B cell (primary cell): ENCODE measurements at regions of chr7 and their contacts with region 1.

Region 1: DNA sequence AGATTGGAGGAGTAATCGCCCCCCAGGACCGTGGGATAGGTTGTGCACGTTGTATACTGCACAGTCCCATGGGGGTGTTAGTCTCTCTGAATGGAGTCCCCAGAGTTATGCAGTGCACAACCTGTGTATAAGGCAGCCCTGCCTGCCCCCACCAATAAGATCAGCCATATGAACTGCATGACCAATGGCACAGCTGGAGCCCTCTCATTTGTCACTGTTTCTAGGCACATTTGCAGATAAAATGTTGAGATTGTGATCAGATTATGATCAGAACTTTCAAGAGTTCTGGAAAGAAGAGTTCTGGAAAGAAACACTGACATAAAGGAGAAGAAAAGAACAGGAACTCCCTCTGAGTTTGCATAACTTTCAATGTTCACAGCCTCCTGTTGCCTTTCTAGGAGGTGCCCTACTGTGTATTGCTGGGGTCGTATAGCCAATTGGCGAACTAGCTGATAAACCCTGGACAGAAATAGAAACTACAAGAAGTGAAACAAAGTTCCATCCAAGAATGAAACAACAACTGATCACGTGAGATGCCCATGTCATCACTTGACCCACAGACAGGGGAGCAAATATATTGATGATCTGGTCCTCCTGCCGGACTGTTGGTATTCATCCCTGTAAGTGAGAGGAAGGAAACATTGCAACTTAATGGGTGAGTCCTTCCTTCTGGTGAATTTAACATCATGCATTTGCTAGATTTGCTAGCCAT is 49.6 kb upstream of the TOMM7 start:
- DNase-seq: peak; percentile 64
- ATAC-seq: peak; percentile 98
- H3K4me3 ChIP-seq: peak overlapping the region in 4 of 5 experiments; percentile 24 to 51 (median 38)
- H3K4me3 Mint-ChIP-seq: peak overlapping the region; percentile 89
- H3K27ac ChIP-seq: peak overlapping the region; percentile 36 to 42
- H3K27ac Mint-ChIP-seq: peak overlapping the region; percentile 91
- H3K4me1 ChIP-seq: peaks cover 17 to 23% of the 10 kb centered on the region in 2 donors
- H3K4me1 Mint-ChIP-seq: peaks cover 31% of the 10 kb centered on the region
- H3K27me3 ChIP-seq: no peaks in the 10 kb centered on the region
- H3K27me3 Mint-ChIP-seq: no peaks in the 10 kb centered on the region
- CTCF ChIP-seq: no peak

Region 2: DNA sequence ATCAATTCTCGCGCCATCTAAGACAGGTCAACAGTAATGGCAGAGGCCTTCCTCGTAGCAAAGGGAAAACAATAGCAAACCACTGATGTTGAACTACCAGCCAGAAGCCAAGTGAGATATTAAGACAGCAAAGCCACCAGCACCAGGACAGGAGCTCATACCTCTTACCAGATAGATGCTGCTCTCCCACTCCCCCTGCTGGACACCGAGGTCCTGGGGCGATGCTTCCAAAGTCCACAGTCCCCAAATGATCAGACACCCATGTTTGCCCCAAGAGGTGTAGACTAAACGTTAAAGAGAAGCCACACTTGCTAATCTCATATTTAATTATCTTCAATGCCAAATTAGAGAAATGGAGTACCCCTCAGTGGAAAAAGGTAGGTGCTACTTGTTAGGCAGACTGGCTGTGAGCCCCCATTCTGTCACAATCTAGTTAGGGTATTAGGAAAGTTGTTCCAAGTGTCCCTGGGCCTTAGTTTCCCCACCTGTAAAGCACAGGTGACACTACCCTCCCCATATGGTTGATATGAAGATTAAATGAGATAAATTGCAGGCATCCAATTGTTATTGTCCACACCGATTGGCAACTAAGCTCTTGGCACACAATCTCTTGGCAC is 89.5 kb before region 1 on chr7:
- CTCF ChIA-PET with region 1: no interaction called
- POLR2A ChIA-PET with region 1: no interaction called
- intact Hi-C with region 1: no loop called
- DNase-seq: peak; percentile 84
- ATAC-seq: peak; percentile 96
- H3K4me3 ChIP-seq: no peak overlapping the region
- H3K4me3 Mint-ChIP-seq: no peak overlapping the region
- H3K27ac ChIP-seq: no peak overlapping the region
- H3K27ac Mint-ChIP-seq: no peak overlapping the region
- H3K4me1 ChIP-seq: no peaks in the 10 kb centered on the region
- H3K4me1 Mint-ChIP-seq: peaks cover 3% of the 10 kb centered on the region
- H3K27me3 ChIP-seq: no peaks in the 10 kb centered on the region
- H3K27me3 Mint-ChIP-seq: no peaks in the 10 kb centered on the region
- CTCF ChIP-seq: peak; percentile 87

Region 3: DNA sequence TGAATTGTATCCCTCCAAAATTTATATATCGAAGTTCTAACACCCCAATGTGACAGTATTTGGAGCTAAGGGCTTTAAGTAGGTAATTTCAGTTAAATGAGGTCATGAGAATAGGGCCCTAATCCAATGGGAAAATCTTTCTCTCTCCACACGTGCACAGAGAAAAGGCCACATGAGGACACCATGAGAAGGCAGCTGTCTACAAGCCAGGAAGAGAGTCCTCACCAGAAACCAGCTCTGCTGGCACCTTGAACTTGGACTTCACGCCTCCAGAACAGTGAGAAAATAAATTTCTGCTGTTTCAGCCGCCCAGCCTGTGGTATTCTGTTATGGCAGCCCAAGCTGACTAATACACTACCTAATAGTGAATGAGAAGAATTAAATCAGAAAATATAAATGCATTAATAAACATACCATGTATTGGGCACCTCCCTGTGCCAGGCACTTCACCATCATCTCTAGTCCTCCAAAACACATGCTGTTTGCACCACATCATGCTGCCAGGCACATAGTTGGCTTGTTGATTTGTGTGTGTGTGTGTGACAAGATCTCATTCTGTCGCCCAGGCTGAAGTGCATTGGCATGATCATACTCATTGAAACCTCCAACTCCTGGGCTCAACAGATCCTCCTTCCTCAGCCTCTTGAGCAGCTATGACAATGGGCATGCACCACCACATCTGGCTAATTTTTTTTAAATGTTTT is 40.5 kb before region 1 on chr7:
- CTCF ChIA-PET with region 1: no interaction called
- POLR2A ChIA-PET with region 1: no interaction called
- intact Hi-C with region 1: no loop called
- DNase-seq: no peak
- ATAC-seq: no peak
- H3K4me3 ChIP-seq: no peak overlapping the region
- H3K4me3 Mint-ChIP-seq: no peak overlapping the region
- H3K27ac ChIP-seq: no peak overlapping the region
- H3K27ac Mint-ChIP-seq: no peak overlapping the region
- H3K4me1 ChIP-seq: no peaks in the 10 kb centered on the region
- H3K4me1 Mint-ChIP-seq: no peaks in the 10 kb centered on the region
- H3K27me3 ChIP-seq: no peaks in the 10 kb centered on the region
- H3K27me3 Mint-ChIP-seq: no peaks in the 10 kb centered on the region
- CTCF ChIP-seq: no peak

Region 4: DNA sequence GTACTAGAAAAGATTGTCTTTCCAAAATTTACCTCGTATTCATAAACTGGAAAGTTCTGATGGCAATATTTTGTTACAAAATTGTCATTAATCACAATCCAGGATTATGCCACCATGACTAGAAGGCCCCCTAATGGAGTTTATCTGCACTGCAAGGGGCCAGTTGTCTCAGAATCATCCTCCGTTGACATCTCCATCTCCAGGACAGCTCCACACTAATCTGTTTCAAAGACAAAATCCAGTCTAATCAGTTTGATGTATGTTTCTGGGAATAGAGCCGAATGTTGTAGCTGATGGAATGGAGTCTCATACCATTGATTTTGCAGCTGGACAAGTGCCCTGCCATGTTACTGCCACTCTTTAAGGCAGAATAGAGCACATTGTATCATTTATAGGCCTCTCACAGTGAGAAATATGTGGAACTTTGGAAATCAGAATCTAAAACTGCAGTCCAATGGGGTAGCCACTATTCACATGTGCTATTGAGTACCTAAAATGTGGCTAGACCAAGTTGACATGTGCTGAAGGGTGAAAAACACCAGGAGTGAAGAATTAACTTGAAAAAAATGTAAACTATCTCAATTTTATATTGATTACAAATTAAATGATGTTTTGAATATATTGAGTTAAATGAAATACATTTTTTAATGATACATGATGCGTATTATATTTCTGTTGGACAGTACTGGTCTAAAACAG is 11.3 kb before region 1 on chr7:
- CTCF ChIA-PET with region 1: interaction called, 12 read pairs
- POLR2A ChIA-PET with region 1: no interaction called
- intact Hi-C with region 1: no loop called
- DNase-seq: peak; percentile 39
- ATAC-seq: peak; percentile 66
- H3K4me3 ChIP-seq: no peak overlapping the region
- H3K4me3 Mint-ChIP-seq: no peak overlapping the region
- H3K27ac ChIP-seq: no peak overlapping the region
- H3K27ac Mint-ChIP-seq: peak overlapping the region; percentile 11
- H3K4me1 ChIP-seq: peaks cover 0 to 3% of the 10 kb centered on the region in 2 donors
- H3K4me1 Mint-ChIP-seq: peaks cover 39% of the 10 kb centered on the region
- H3K27me3 ChIP-seq: no peaks in the 10 kb centered on the region
- H3K27me3 Mint-ChIP-seq: no peaks in the 10 kb centered on the region
- CTCF ChIP-seq: peak; percentile 82

Region 5: DNA sequence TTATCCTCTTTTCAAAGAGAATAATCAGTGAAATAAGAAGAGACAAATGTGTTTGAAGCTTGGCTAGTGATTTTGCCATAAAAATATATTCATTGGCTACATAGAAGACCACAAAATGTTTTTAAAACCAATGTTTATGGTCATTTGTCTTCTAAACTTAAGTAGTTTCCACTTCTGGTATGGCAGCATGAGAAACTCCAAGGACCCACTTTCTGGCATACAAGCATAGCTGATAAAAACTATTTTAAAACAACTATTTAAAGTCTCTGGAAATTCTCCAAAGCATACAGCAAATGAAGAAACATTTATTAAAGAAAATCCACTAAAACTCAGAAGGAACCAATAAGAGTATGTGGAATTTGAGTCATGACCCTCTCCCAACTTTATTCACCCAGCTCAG is 39.6 kb after region 1 on chr7:
- CTCF ChIA-PET with region 1: no interaction called
- POLR2A ChIA-PET with region 1: no interaction called
- intact Hi-C with region 1: no loop called
- DNase-seq: no peak
- ATAC-seq: no peak
- H3K4me3 ChIP-seq: no peak overlapping the region
- H3K4me3 Mint-ChIP-seq: no peak overlapping the region
- H3K27ac ChIP-seq: no peak overlapping the region
- H3K27ac Mint-ChIP-seq: no peak overlapping the region
- H3K4me1 ChIP-seq: no peaks in the 10 kb centered on the region
- H3K4me1 Mint-ChIP-seq: no peaks in the 10 kb centered on the region
- H3K27me3 ChIP-seq: no peaks in the 10 kb centered on the region
- H3K27me3 Mint-ChIP-seq: no peaks in the 10 kb centered on the region
- CTCF ChIP-seq: no peak

Region 6: DNA sequence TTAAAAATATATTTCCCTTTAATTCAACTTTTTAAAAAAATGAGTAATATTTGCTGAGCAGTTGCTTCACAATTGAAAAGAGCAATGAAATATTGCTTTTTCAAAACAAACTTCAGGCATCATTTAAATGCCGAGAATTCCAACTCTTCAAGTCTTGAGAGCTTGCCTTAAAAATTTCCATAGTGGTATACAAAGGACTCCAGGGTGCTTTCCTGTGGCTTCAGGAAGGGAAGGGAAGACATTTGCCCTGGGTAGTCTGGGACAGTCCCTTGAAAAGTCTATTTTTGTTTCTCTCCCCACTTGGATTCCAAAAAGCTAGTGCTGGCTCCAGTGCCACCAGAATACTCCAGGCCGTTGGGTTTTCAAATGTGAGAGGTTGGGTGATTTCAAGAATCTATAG is 69.9 kb after region 1 on chr7:
- CTCF ChIA-PET with region 1: no interaction called
- POLR2A ChIA-PET with region 1: no interaction called
- intact Hi-C with region 1: no loop called
- DNase-seq: no peak
- ATAC-seq: no peak
- H3K4me3 ChIP-seq: no peak overlapping the region
- H3K4me3 Mint-ChIP-seq: no peak overlapping the region
- H3K27ac ChIP-seq: no peak overlapping the region
- H3K27ac Mint-ChIP-seq: no peak overlapping the region
- H3K4me1 ChIP-seq: no peaks in the 10 kb centered on the region
- H3K4me1 Mint-ChIP-seq: no peaks in the 10 kb centered on the region
- H3K27me3 ChIP-seq: no peaks in the 10 kb centered on the region
- H3K27me3 Mint-ChIP-seq: no peaks in the 10 kb centered on the region
- CTCF ChIP-seq: no peak